ENCODE measurements at regions of chr5 and their contacts with region 1.

Region 1: DNA sequence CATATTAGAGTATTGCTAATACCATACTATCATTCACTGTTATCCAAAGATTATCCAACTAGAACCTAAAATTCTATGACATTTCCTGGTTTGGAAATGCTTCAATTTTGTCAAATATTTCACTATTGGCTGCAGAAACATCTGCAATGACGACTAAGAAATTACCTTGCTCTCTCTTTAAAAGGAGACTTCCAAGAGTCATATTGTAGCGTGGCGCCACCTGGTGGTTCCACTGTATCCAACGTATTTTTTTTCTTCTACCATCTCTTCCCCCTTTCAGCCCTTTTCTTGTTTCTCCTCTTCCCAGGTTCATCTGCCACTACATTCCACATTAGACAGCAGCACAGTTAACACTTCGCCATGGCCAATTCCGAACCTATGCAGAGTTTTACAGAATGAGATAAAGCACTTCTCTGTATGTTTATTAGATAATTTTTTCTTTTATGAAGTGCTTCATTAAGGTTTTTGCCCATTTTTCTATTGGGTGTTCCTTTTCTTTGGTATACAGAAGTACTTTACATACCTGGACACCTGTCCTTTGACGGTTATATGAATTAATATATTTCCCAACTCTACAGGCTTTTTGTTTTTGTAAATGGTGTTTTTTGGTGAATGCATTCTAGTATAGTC is 153.5 kb downstream of the CDC42SE2 start:
- DNase-seq: peak; percentile 71 to 79 (median 77)
- H3K4me3 ChIP-seq: no peak overlapping the region
- H3K4me3 Mint-ChIP-seq: peak overlapping the region in 7 of 8 donors; percentile 5 to 81 (median 60)
- H3K27ac ChIP-seq: peak overlapping the region; percentile 45
- H3K27ac Mint-ChIP-seq: peak overlapping the region; percentile 68 to 92 (median 85)
- H3K4me1 ChIP-seq: peaks cover 37% of the 10 kb centered on the region
- H3K4me1 Mint-ChIP-seq: peaks cover 35 to 56% (median 46%) of the 10 kb centered on the region in 4 donors
- H3K27me3 ChIP-seq: no peaks in the 10 kb centered on the region
- H3K27me3 Mint-ChIP-seq: no peaks in the 10 kb centered on the region

Region 2: DNA sequence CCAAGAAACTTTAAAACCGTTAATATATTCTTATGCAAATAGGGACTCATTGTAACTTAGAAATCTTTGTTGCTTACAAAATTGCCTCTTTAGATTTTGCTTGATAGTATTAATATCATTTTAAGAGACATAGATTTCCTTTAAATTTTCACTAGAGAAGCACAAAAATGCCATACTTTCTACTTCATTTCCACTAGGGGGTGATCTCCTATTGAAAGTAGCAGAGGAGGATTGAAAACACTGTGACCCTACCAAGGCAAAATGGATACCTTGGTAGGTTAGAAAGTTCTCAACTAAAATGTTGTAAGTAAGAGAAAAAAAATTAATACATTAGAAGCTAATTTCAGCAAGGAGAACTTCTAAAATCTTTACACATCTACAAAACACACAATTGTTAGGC is 1308.2 kb before region 1 on chr5:
- CTCF ChIA-PET with region 1: no interaction called
- POLR2A ChIA-PET with region 1: no interaction called
- intact Hi-C with region 1: loop called (anchors 5 kb)
- DNase-seq: peak in 4 of 5 donors; percentile 8 to 23 (median 11)
- H3K4me3 ChIP-seq: no peak overlapping the region
- H3K4me3 Mint-ChIP-seq: no peak overlapping the region
- H3K27ac ChIP-seq: no peak overlapping the region
- H3K27ac Mint-ChIP-seq: no peak overlapping the region
- H3K4me1 ChIP-seq: no peaks in the 10 kb centered on the region
- H3K4me1 Mint-ChIP-seq: no peaks in the 10 kb centered on the region
- H3K27me3 ChIP-seq: no peaks in the 10 kb centered on the region
- H3K27me3 Mint-ChIP-seq: no peaks in the 10 kb centered on the region

Region 3: GRCh38 chr5:130871346-130872086 is 545.8 kb before region 1 on chr5:
- CTCF ChIA-PET with region 1: interaction called, 14 read pairs
- POLR2A ChIA-PET with region 1: no interaction called
- intact Hi-C with region 1: loop called (anchors 1 kb)
- DNase-seq: peak; percentile 34 to 60 (median 49)
- H3K4me3 ChIP-seq: no peak overlapping the region
- H3K4me3 Mint-ChIP-seq: no peak overlapping the region
- H3K27ac ChIP-seq: no peak overlapping the region
- H3K27ac Mint-ChIP-seq: no peak overlapping the region
- H3K4me1 ChIP-seq: no peaks in the 10 kb centered on the region
- H3K4me1 Mint-ChIP-seq: no peaks in the 10 kb centered on the region
- H3K27me3 ChIP-seq: no peaks in the 10 kb centered on the region
- H3K27me3 Mint-ChIP-seq: no peaks in the 10 kb centered on the region

Region 4: DNA sequence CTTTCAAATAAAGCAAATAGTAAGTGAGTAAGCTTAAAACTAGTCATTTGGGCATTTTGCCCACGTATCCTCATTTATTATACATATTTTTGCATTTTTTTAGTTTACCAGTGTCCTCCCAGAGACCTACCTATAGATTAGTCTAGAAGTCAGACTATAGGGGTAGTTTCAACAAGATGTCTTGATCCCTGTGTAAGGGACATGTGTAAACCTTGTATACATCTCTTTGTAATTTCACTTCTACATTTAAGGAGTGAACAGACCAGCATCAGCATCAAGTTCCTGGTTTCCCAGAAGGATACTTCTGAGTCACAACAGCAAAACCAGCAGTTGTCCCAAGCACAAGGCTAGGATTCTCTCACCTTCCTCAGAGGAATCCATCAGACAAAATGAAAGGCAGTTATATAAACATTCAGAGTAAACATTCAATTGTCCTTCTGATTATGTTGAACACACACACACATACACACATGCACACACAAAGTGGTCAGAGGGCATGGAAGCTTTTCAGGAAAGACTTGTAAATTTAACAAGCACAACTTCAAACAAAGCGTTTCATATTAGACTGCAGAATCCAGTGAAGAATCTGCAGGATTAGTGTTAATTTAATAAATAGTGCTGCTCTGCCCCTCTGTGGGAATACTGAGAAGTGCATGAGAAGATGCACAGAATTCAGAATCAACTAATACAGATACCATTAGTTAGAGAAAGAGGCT is 307.7 kb before region 1 on chr5:
- CTCF ChIA-PET with region 1: interaction called, 3 read pairs
- POLR2A ChIA-PET with region 1: no interaction called
- intact Hi-C with region 1: loop called (anchors 1 kb)
- DNase-seq: peak in 4 of 5 donors; percentile 41 to 58 (median 54)
- H3K4me3 ChIP-seq: no peak overlapping the region
- H3K4me3 Mint-ChIP-seq: no peak overlapping the region
- H3K27ac ChIP-seq: no peak overlapping the region
- H3K27ac Mint-ChIP-seq: no peak overlapping the region
- H3K4me1 ChIP-seq: peaks cover 5% of the 10 kb centered on the region
- H3K4me1 Mint-ChIP-seq: peaks cover 0 to 4% (median 4%) of the 10 kb centered on the region in 4 donors
- H3K27me3 ChIP-seq: no peaks in the 10 kb centered on the region
- H3K27me3 Mint-ChIP-seq: peaks cover 0 to 2% of the 10 kb centered on the region in 2 donors

Region 5: DNA sequence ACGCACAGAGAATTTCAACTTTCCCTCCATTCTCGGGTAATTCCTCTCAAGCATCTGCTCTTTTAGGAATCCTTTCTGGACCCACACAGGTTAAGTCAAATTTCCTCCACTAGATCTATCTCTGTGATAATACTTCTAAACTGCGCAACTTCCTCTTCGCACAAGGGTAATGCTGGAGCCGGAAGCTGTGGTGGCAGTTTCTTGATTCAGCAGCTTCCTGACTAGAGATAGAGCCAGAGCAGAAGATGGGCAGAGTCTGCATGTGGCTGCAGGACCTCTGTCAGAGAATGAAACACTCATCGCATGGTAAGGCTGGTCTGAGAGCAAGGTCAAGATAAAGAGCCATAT is 164.6 kb before region 1 on chr5:
- CTCF ChIA-PET with region 1: interaction called, 10 read pairs
- POLR2A ChIA-PET with region 1: interaction called, 5 read pairs
- intact Hi-C with region 1: no loop called
- DNase-seq: peak; percentile 86 to 95 (median 88)
- H3K4me3 ChIP-seq: peak overlapping the region; percentile 60 to 80
- H3K4me3 Mint-ChIP-seq: peak overlapping the region; percentile 94 to 98 (median 97)
- H3K27ac ChIP-seq: peak overlapping the region; percentile 79
- H3K27ac Mint-ChIP-seq: peak overlapping the region; percentile 92 to 99 (median 97)
- H3K4me1 ChIP-seq: peaks cover 58% of the 10 kb centered on the region
- H3K4me1 Mint-ChIP-seq: peaks cover 46 to 78% (median 54%) of the 10 kb centered on the region in 4 donors
- H3K27me3 ChIP-seq: no peaks in the 10 kb centered on the region
- H3K27me3 Mint-ChIP-seq: no peaks in the 10 kb centered on the region

Measured in CD4-positive, alpha-beta memory T cell (primary cell).